Body of pancreas (tissue), 4 donors: ENCODE measurements at regions of chr4 and their contacts with region 1.

Region 1: GRCh38 chr4:152500800-152501434 is 35.0 kb downstream of the FBXW7 start:
- DNase-seq: peak; percentile 35 to 79 (median 56)
- ATAC-seq: peak; percentile 71
- H3K4me3 ChIP-seq: no peak overlapping the region
- H3K27ac ChIP-seq: no peak overlapping the region
- H3K4me1 ChIP-seq: peaks cover 14% of the 10 kb centered on the region
- H3K27me3 ChIP-seq: no peaks in the 10 kb centered on the region
- CTCF ChIP-seq: peak; percentile 62 to 84 (median 73)
- POLR2A ChIP-seq: no peak

Region 2: DNA sequence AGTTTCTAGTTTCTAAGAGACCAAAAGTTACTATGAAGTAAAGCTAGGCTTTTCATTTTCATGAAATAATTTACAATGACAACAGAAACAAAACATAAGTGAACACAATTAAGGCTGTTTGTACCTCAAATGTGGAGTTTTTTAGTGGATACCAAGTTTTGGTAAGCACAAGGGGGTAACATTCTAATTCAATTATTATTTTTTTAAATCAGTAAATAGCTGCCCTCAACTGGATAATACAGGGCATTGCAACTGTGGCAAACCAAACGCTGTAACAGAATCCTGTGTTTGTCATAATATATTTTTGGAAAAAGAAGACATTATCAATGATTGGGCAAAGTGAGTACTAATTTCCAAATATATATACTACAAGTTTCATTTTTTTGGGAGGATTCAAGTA is 115.4 kb before region 1 on chr4:
- intact Hi-C with region 1: no loop called
- DNase-seq: no peak
- ATAC-seq: no peak
- H3K4me3 ChIP-seq: no peak overlapping the region
- H3K27ac ChIP-seq: no peak overlapping the region
- H3K4me1 ChIP-seq: peaks cover 10% of the 10 kb centered on the region
- H3K27me3 ChIP-seq: no peaks in the 10 kb centered on the region
- CTCF ChIP-seq: peak; percentile 22 to 62 (median 50)
- POLR2A ChIP-seq: no peak

Region 3: GRCh38 chr4:152398060-152398459 is 102.9 kb before region 1 on chr4:
- intact Hi-C with region 1: no loop called
- DNase-seq: no peak
- ATAC-seq: no peak
- H3K4me3 ChIP-seq: no peak overlapping the region
- H3K27ac ChIP-seq: no peak overlapping the region
- H3K4me1 ChIP-seq: no peaks in the 10 kb centered on the region
- H3K27me3 ChIP-seq: no peaks in the 10 kb centered on the region
- CTCF ChIP-seq: peak in 3 of 7 experiments; percentile 8 to 20 (median 12)
- POLR2A ChIP-seq: no peak

Region 4: DNA sequence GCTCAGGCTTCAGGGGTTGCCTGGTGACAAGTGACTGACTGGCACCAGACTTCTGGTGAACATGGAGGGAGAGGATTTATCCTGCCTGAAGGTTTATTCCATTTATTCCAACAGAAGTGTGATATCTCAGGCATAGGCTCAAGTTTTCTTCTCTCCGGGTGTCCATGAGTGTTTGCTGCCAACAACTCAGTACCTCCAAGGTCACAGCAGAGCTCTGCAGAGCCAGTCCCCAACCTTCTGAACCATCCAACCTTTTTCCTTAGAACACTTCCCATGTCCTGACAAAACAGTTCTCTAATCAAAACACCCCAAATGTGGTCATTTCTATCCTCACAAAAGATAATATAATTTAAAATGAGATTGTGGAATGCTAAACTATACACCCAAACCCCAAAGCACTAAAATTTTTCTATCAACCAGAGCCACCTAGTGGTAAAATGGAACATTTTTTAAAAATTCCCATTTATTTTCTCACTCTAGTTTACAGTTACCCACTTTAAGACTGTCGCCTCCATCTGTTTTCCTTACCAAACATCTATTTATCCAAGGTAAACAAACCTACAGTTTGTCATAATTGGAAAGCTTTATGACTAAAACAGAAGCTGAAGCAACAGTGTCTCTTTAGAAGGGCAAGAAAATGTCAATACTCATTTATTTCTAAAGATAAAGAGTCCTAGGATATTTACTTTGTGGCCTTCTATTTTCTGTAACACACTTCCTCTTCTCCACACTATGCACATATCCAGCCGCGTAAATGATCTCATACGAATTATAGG is 139.3 kb after region 1 on chr4:
- intact Hi-C with region 1: loop called (anchors 10 kb)
- DNase-seq: peak in 3 of 4 donors; percentile 29 to 52 (median 46)
- ATAC-seq: no peak
- H3K4me3 ChIP-seq: no peak overlapping the region
- H3K27ac ChIP-seq: no peak overlapping the region
- H3K4me1 ChIP-seq: peaks cover 5% of the 10 kb centered on the region
- H3K27me3 ChIP-seq: no peaks in the 10 kb centered on the region
- CTCF ChIP-seq: peak; percentile 37 to 71 (median 52)
- POLR2A ChIP-seq: no peak